ENCODE measurements at regions of chr6 and their contacts with region 1.

Region 1: GRCh38 chr6:151196555-151196954 is 43.2 kb upstream of the AKAP12 start:
- DNase-seq: no peak
- ATAC-seq: no peak
- H3K4me3 ChIP-seq: no peak overlapping the region
- H3K27ac ChIP-seq: no peak overlapping the region
- H3K4me1 ChIP-seq: no peaks in the 10 kb centered on the region
- H3K27me3 ChIP-seq: no peaks in the 10 kb centered on the region
- CTCF ChIP-seq: no peak

Region 2: DNA sequence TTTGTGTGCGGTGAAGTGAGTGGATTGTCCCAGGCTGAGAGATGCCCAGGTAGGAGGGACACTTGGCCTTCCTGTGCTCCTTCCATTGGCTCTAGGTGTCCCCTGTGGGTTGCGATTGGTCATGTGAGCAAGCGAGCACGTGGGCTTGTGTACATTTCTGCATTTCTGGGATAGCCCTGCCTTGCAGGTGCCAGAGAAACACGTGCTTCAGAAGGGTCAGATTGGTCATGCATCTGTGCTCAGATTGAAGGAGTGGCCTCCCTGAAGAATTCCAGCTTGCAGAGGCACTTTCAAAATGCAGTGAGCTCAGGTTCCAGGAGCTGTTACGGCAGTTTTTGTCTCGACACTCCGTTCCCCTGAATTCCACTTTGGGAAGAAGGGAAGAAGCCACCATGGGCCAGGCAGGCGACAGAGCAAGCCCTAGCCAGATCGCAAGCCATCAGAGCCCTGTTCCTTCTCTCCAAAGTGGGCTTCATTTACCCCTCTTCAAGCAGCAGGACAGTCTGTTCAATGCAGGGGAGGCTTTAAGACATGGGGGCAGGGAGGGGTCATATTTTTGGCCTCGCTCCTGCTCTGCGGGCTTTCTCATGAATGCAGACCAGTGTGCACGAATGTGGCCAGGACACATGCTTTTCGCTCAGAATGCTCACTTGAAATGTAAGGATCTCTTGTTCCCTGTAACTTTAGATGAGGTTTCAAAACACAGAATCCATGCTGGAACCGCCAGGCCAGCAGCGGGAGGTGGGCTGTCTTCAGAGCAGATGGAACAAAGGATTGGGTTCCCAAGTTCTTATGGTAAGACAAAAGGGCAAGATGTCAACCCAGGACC is 35.4 kb before region 1 on chr6:
- CTCF ChIA-PET with region 1: no interaction called
- POLR2A ChIA-PET with region 1: no interaction called
- in situ Hi-C with region 1: no loop called
- intact Hi-C with region 1: loop called (anchors 1 kb)
- DNase-seq: no peak
- ATAC-seq: peak; percentile 73
- H3K4me3 ChIP-seq: 0 out of 4 replicates have a peak overlapping the region, but pooled peaks of 1 of the 2 experiments have one; percentile 4
- H3K27ac ChIP-seq: no peak overlapping the region
- H3K4me1 ChIP-seq: no peaks in the 10 kb centered on the region
- H3K27me3 ChIP-seq: no peaks in the 10 kb centered on the region
- CTCF ChIP-seq: no peak

Region 3: GRCh38 chr6:151451950-151452749 is 255.6 kb after region 1 on chr6 and contains the start of gene RMND1:
- CTCF ChIA-PET with region 1: no interaction called
- POLR2A ChIA-PET with region 1: no interaction called
- in situ Hi-C with region 1: no loop called
- intact Hi-C with region 1: no loop called
- DNase-seq: peak; percentile 97
- ATAC-seq: peak; percentile 100
- H3K4me3 ChIP-seq: peak within 1 kb of the TSS; percentile 97 to 99
- H3K27ac ChIP-seq: peak within 1 kb of the TSS; percentile 97
- H3K4me1 ChIP-seq: peaks cover 13% of the 10 kb centered on the region; the same call in 1 of the 2 replicates
- H3K27me3 ChIP-seq: no peaks in the 10 kb centered on the region
- CTCF ChIP-seq: no peak
- total RNA-seq, gene RMND1: 16.1 TPM